Activated CD4-positive, alpha-beta T cell treated with anti-CD3 and anti-CD28 coated beads for 36 hours (primary cell): ENCODE measurements at regions of chr20 and their contacts with region 1.

Region 1: GRCh38 chr20:23420943-23421931 is at the start of gene NAPB:
- DNase-seq: peak; percentile 96
- ATAC-seq: peak; percentile 99
- H3K4me3 Mint-ChIP-seq: peak within 1 kb of the TSS; percentile 86
- H3K27ac Mint-ChIP-seq: peak within 1 kb of the TSS; percentile 60
- H3K4me1 Mint-ChIP-seq: peaks cover 26% of the 10 kb centered on the region
- H3K27me3 Mint-ChIP-seq: peaks cover 8% of the 10 kb centered on the region
- total RNA-seq, gene NAPB: 6.1 to 8.1 TPM

Region 2: DNA sequence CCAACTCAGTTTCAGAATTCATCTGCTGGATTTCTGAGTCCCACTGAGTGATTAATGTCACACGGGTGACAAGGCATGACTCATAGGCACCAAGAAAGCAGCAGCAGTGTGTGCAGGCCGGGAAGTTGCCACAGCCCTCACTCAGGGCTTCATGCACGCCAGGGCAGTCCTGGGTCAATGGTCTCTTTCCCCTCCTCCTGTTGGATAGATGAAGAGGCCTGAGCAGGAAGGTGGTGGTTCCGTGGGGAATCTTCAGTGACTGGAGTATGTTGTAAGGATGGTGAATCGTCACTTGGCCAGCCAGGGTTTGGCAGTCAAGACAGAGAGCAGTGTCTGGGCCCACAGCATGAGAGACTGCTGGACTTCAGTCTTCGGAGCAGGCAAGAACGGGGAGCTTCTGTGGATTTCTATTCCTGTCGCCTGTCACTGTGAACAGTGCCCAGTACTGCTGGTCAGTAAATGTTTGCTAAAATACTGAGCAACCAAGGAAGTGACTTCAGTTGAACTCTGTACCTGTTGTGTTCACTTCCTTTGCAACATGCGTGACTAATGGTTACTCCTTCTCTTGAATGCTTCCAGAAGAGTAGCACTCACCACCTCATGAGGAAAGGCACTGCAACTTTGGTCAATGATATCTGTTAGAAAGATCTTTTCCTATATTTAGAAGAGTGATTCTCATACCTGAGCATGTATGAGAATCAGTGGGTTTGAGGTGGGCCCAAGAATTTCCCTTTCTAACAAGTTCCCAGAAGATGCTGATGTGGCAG is 273.1 kb before region 1 on chr20:
- CTCF ChIA-PET with region 1: interaction called, 3 read pairs
- POLR2A ChIA-PET with region 1: no interaction called
- intact Hi-C with region 1: loop called in 1 of 2 experiments (anchors 10 kb)
- DNase-seq: peak; percentile 76
- ATAC-seq: peak; percentile 93
- H3K4me3 Mint-ChIP-seq: no peak overlapping the region
- H3K27ac Mint-ChIP-seq: peak overlapping the region; percentile 88
- H3K4me1 Mint-ChIP-seq: peaks cover 29% of the 10 kb centered on the region
- H3K27me3 Mint-ChIP-seq: peaks cover 8% of the 10 kb centered on the region

Region 3: DNA sequence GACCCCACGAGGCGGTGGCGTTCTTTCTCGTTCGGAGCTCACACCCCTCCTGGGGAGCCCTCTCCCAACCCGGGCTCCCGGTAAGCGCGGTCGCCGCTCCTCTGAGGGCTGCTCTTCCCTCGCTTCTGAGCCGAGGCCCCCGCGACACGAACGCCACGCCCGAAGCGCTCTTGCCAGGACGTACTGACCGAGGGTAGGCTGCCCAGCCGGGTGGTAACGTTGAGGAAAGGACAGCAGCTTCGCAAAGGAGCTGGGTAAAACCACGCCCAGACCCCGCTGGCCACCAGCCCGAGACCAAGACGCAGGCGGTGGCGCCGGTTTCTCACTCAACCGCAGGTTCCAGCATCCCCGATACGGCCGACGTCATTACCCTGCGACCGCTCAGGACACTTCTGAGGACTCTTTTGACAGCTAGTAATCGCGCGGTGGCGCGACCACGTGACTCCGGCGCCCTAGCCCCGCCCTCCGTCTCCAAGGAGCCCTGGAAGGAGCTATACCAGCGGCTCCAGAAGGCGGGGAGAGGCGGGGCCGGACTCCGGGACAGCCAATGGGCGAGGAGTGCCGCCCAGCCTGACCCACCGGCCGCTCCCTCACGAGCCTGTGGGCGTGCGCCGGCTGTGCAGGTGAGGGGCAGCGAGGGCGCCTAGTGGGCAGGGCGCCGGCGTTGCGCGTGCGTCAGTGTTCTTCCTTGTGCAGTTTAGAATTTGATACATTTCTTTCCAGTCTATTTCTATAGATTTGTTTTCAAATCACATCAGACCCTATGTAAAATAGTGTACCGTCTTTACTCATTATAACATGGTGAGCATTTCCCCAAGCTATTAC is 63.3 kb before region 1 on chr20:
- CTCF ChIA-PET with region 1: interaction called, 4 read pairs
- POLR2A ChIA-PET with region 1: interaction called, 4 read pairs
- intact Hi-C with region 1: loop called in 1 of 2 experiments (anchors 1 kb)
- DNase-seq: peak; percentile 100
- ATAC-seq: peak; percentile 84
- H3K4me3 Mint-ChIP-seq: peak overlapping the region; percentile 88
- H3K27ac Mint-ChIP-seq: peak overlapping the region; percentile 93
- H3K4me1 Mint-ChIP-seq: peaks cover 15% of the 10 kb centered on the region
- H3K27me3 Mint-ChIP-seq: no peaks in the 10 kb centered on the region

Region 4: GRCh38 chr20:23399568-23400241 is 21.5 kb before region 1 on chr20:
- CTCF ChIA-PET with region 1: interaction called, 9 read pairs
- POLR2A ChIA-PET with region 1: interaction called, 5 read pairs
- intact Hi-C with region 1: loop called in 1 of 2 experiments (anchors 1 kb)
- DNase-seq: peak; percentile 38
- ATAC-seq: peak; percentile 93
- H3K4me3 Mint-ChIP-seq: no peak overlapping the region
- H3K27ac Mint-ChIP-seq: no peak overlapping the region
- H3K4me1 Mint-ChIP-seq: peaks cover 36% of the 10 kb centered on the region
- H3K27me3 Mint-ChIP-seq: no peaks in the 10 kb centered on the region

Region 5: DNA sequence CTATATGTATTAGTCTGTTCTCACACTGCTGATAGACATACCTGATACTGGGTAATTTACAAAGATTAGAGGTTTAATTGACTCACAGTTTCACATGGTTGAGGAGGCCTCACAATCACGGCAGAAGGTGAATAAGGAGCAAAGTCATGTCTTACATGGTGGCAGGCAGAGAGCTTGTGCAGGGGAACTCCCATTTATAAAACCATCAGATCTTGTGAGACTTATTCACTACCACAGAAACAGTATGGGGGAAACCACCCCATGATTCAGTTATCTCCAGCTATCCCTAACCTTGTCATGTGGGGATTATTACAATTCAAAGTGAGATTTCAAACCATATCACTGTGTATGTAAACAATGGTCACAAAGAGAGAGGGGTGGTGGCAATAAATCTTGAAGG is 76.3 kb after region 1 on chr20:
- CTCF ChIA-PET with region 1: no interaction called
- POLR2A ChIA-PET with region 1: no interaction called
- intact Hi-C with region 1: loop called in 1 of 2 experiments (anchors 1 kb)
- DNase-seq: peak; percentile 57
- ATAC-seq: peak; percentile 95
- H3K4me3 Mint-ChIP-seq: no peak overlapping the region
- H3K27ac Mint-ChIP-seq: no peak overlapping the region
- H3K4me1 Mint-ChIP-seq: peaks cover 15% of the 10 kb centered on the region
- H3K27me3 Mint-ChIP-seq: peaks cover 36% of the 10 kb centered on the region